ENCODE measurements at regions of chr7 and their contacts with region 1.

Region 1: DNA sequence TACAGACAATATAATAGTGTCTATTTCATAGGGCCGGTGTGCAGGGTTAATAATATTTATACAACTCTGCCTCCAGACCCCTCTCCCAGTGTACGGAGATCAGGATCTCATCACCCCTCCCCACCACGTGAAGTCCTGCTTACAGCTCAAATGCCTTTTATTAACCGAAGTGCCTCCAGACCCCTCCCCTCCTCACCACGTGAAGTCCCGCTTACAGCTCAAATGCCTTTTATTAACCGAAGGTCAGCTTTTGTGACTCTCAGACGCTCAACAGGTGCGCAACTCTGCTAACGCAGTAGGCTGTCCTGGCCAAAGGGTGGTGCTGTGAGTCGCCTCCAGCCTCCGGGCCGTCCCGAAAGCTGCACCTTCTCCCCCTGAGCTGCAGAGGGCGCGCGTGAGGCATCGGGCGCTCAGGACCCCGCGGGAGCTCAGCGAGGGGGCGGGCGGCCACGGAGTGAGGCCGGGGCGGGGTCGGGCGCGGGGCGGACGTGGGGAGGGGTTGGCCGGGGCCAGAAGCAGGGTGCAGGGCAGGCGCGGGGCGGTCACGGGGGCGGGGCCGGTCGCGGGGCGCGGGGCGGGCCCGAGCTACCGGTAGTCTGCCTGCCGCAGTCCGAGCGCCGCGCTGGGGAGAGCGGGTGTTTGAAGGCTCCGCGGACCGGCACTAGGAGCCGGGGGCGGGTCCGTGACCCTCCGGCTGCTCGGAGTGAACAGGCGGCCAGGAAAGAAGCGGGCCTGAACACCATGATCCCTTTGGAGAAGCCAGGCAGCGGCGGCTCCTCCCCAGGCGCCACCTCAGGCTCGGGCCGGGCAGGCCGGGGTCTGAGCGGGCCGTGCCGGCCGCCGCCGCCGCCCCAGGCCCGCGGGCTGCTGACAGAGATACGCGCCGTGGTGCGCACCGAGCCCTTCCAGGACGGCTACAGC is at the start of gene STK17A:
- DNase-seq: peak; percentile 95 to 97 (median 97)
- H3K4me3 ChIP-seq: peak within 1 kb of the TSS; percentile 75 to 86 (median 86)
- H3K27ac ChIP-seq: peak within 1 kb of the TSS; percentile 89
- H3K4me1 ChIP-seq: peaks cover 0 to 5% (median 4%) of the 10 kb centered on the region in 3 donors
- H3K27me3 ChIP-seq: no peaks in the 10 kb centered on the region
- CTCF ChIP-seq: peak; percentile 100
- total RNA-seq, gene STK17A: 15.5 TPM

Region 2: DNA sequence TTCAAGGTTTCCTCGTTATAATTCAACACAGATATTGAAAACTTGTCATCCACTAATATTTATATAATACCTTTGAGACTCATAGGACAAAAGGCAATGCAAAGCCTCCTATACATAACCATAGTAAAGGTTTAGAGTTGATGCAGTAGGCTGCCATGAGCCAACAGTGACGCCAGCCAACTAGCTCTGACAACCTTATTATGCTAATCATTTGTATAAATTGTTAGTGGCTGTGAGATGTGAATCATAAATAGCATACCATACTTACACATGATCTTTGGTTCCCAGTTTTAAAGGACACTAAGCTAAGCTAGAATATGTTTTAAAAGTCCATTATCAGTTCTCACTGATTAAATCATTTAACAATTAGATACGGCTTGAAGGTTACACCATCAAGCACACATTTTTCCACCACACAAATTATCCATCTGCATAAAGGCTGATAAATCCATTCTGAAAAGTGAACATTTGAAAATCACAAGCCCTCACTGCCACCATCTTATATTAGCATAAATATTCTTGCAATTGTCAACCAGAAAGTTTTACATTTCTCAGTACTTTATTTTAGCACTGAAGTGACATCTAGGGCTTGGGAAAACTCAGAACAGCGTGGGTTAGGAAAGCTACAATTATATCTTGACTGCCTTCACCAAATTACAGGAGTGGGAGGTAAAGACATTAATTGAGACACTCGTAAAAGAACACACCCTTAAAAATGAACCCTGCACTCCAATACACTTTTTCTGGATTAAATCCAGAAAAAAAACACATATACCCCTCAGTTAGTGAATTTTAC is 115.9 kb after region 1 on chr7:
- intact Hi-C with region 1: loop called (anchors 5 kb)
- DNase-seq: no peak
- H3K4me3 ChIP-seq: no peak overlapping the region
- H3K27ac ChIP-seq: no peak overlapping the region
- H3K4me1 ChIP-seq: peaks cover 0 to 5% (median 0%) of the 10 kb centered on the region in 3 donors
- H3K27me3 ChIP-seq: no peaks in the 10 kb centered on the region
- CTCF ChIP-seq: no peak

Measured in kidney (tissue), 22 donors.